ENCODE measurements at regions of chr7 and their contacts with region 1.

Region 1: DNA sequence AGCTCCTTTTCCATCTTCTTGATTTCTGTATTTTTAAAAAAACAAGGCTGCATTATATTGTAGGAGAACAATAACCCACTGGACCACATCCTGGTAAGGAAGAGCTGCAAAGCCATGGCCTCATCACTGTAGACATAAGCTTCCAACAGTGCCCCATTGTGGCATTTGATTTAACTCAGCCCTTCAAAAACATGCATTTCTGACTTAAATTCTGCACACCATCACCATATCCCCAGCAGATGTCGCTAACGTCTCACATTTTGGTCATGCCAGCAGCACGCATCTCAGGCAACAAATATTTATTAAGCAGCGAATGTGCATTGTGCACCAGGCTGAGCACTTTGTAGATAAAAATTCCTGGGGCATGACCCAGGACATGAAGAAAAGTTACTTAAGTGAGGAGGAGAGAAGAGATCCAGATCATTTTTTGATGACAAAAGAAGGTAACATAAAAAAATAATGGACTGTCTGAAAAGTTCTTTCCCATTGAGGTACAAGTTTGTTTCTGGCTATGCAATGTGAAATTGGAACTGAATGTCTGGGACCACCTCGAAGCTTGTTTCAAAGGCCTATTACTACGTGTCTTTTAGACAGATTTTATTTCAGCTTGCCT is 164.6 kb upstream of the CDCA7L start:
- DNase-seq: peak in 2 of 4 donors; percentile 78 to 90
- ATAC-seq: peak; percentile 92
- H3K4me3 ChIP-seq: no peak overlapping the region
- H3K27ac ChIP-seq: no peak overlapping the region
- H3K4me1 ChIP-seq: peaks cover 0 to 9% of the 10 kb centered on the region in 2 donors
- H3K27me3 ChIP-seq: no peaks in the 10 kb centered on the region
- CTCF ChIP-seq: peak; percentile 58 to 73

Region 2: GRCh38 chr7:22061775-22062174 is 48.6 kb before region 1 on chr7:
- intact Hi-C with region 1: no loop called
- DNase-seq: no peak
- ATAC-seq: no peak
- H3K4me3 ChIP-seq: no peak overlapping the region
- H3K27ac ChIP-seq: no peak overlapping the region
- H3K4me1 ChIP-seq: no peaks in the 10 kb centered on the region
- H3K27me3 ChIP-seq: no peaks in the 10 kb centered on the region
- CTCF ChIP-seq: no peak

Region 3: DNA sequence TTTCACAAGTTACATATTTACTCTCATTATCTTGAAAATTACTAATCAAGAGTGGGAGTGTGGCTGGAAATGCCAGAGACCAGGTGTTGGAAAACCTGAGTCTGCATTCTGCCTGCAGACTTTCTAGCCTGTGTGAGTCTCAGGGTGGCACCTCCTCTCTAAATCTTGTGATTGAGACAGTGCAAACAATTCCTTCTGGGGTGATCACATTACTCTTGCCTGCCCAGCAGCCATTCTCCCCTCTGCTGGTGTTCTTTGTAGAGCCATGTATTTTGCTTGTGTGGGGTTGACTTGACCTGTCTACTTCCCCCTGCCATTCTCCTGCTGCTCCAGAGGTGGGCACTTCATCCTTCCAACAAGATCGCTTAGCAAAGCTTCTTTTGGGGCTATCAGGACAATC is 145.5 kb after region 1 on chr7:
- intact Hi-C with region 1: loop called in 1 of 2 experiments (anchors 5 kb)
- DNase-seq: peak in 2 of 4 donors; percentile 7 to 34
- ATAC-seq: peak; percentile 95
- H3K4me3 ChIP-seq: no peak overlapping the region
- H3K27ac ChIP-seq: peak overlapping the region in 1 of 2 donors; percentile 50
- H3K4me1 ChIP-seq: no peaks in the 10 kb centered on the region
- H3K27me3 ChIP-seq: no peaks in the 10 kb centered on the region
- CTCF ChIP-seq: no peak

Region 4: DNA sequence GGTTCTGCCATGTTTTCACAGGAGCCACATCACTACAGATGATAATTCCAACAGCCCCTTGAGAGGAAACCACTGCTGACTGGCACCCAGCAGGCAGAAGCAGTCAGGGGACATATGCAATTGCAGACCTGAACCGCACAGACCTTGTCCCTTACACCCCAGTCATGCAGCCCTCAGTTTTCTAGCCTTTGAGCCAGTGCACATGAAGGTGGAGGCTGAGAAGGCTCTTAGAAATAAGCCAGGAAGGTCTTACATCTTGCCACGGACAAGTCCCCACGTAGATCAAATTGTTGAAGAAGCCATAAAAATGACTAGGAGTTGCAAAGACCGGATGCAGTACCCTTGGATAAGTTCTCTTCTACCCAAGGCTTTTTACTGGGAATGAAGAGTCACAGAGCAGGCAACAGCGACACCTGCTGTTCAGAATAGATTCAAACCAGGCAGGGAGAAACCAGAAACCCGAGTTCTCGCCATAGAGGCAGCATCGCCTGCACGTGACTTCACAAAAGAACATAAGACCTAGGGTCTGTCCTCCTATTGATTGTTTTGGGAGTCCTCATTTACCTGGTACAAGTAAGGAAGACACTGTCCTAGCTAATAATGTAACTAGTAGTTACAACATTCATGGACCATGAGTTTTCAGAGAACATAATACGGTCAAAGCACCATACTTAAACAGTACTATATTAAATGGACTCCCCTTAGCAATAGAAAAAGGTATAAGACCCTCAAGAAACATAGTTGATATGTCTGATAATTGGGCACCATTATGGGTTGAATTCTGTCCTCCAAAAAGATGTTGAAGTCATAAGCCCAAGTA is 378.5 kb after region 1 on chr7:
- intact Hi-C with region 1: loop called in 1 of 2 experiments (anchors 5 kb)
- DNase-seq: peak in 3 of 4 donors; percentile 44 to 81 (median 59)
- ATAC-seq: peak; percentile 96
- H3K4me3 ChIP-seq: no peak overlapping the region
- H3K27ac ChIP-seq: no peak overlapping the region
- H3K4me1 ChIP-seq: no peaks in the 10 kb centered on the region
- H3K27me3 ChIP-seq: no peaks in the 10 kb centered on the region
- CTCF ChIP-seq: peak; percentile 90 to 92

Measured in left lung (tissue), 14 donors.